ENCODE measurements at regions of chr1 and their contacts with region 1.

Region 1: DNA sequence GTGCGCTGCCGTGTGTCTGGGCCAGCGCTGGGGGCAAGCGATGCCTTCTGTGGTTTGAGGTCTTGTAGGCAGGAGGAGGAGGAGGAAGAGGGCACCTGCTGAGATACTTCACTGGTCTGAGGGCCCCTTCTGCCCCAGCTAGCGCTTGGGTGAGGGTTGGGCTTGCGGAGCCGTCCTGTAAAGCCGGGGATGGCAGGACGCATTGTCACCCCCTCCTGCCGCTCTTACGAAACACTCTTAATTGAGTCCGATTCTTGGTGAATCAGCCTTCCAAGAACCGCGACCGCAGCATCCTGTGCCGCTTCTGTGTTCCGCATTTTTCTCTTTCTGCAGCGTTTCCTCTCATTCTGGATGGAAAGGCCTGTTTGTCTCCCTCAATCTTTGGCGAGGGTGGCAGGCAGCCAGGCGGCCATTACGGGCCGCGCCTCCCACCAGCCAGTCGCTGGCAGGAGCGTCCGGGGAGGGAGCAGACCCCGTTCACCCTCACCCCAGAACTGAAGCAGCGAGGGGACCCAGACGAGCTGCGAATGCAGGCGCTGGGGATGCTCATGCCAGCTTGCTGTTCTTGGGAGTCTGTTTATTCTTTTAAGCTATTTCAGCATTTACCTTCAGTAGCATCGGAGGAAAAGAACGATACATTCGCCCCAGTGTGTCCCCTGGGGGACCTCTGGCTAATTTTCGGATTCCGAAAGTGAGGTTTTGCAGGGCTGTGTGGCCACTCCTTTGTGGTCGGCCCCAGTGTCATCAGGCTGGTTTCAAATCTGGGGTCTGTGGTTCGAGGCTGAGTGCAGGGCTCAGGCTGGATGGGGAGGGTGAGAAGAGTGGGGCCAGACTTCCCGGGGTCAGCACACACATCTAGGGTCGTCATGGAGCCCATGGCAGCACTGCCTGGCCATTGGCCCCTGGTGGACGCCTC is 62.7 kb downstream of the SKI start:
- DNase-seq: peak; percentile 98 to 99 (median 99)
- H3K4me3 ChIP-seq: peak overlapping the region in 6 of 7 experiments; percentile 19 to 75 (median 58)
- H3K27ac ChIP-seq: peak overlapping the region; percentile 64 to 80
- H3K4me1 ChIP-seq: peaks cover 10 to 79% (median 75%) of the 10 kb centered on the region in 4 experiments
- H3K27me3 ChIP-seq: no peaks in the 10 kb centered on the region

Region 2: DNA sequence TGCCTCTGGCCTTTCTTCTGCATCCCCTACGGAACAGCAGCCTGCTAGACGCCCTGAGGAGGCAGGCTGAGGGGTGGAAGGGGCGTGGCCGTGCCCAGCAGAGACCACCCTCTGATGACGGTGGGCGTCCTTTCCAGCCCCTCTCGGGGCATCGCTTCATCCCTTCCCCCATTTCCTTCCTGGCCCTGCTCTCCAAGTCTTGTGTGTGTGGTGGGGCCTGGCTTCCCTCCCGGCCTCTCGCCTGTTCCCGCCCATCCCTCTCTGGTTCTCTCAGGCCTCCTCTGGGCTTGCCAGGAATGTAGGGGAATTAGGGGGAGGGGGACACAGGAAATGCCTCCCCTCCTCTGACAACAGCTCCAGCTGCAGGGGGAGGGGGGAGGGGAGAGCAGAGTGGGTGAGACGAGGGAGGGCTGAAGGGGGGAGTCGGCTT is 11.6 kb before region 1 on chr1:
- CTCF ChIA-PET with region 1: interaction called, 6 read pairs
- POLR2A ChIA-PET with region 1: interaction called, 16 read pairs
- DNase-seq: peak; percentile 82 to 93 (median 92)
- H3K4me3 ChIP-seq: peak overlapping the region in 6 of 7 experiments; percentile 3 to 62 (median 29)
- H3K27ac ChIP-seq: peak overlapping the region; percentile 25 to 54
- H3K4me1 ChIP-seq: peaks cover 0 to 57% (median 53%) of the 10 kb centered on the region in 4 experiments
- H3K27me3 ChIP-seq: no peaks in the 10 kb centered on the region

Region 3: DNA sequence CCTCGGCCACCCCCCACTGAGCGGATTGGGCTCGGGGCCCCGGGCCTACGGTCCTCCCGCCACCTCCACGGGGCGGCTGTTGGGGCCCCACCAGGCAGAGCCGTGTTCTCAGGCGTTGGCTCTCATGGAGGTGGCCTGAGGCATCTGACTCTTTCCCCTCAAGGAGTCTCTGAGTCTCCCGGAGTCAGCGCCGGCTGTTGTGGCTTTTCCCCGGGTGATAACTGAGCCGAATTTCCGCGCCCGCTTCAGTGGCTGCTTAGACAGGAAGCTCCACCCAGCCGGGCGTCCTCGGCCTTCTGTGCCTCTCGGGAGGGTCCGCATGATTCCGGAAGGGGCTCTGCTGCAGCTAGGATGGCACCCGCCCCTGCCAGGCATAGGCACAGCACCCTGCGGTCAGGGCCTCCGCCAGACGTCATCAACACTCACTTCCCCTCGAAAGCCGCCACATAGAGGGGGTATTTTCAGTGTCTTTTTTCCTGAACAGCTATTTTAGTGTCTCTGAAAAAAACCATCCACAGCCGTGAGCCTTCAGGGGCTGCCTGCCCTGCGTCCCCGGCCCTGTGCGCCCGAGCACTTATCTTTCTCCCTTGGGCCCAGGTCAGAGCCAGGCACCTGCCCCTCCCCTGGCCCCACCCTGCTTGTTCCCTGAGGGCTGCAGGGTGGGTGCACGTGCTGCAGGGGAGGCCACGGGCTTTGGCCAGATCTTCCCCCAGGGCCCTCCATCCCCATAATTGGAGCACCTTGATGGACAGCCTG is 10.2 kb after region 1 on chr1:
- CTCF ChIA-PET with region 1: interaction called, 31 read pairs
- POLR2A ChIA-PET with region 1: interaction called, 80 read pairs
- DNase-seq: peak; percentile 99 to 100 (median 100)
- H3K4me3 ChIP-seq: peak overlapping the region in 6 of 7 experiments; percentile 19 to 68 (median 59)
- H3K27ac ChIP-seq: peak overlapping the region; percentile 93 to 95
- H3K4me1 ChIP-seq: peaks cover 0 to 82% (median 56%) of the 10 kb centered on the region in 4 experiments
- H3K27me3 ChIP-seq: no peaks in the 10 kb centered on the region

Region 4: GRCh38 chr1:2314803-2315673 is 24.2 kb after region 1 on chr1:
- CTCF ChIA-PET with region 1: interaction called, 17 read pairs
- POLR2A ChIA-PET with region 1: interaction called, 31 read pairs
- DNase-seq: peak; percentile 62 to 81 (median 74)
- H3K4me3 ChIP-seq: peak overlapping the region; percentile 0 to 76 (median 40)
- H3K27ac ChIP-seq: peak overlapping the region; percentile 40 to 68
- H3K4me1 ChIP-seq: peaks cover 0 to 59% (median 55%) of the 10 kb centered on the region in 4 experiments
- H3K27me3 ChIP-seq: no peaks in the 10 kb centered on the region

Measured in common myeloid progenitor, CD34-positive (primary cell).